ENCODE measurements at regions of chr5 and their contacts with region 1.

Region 1: DNA sequence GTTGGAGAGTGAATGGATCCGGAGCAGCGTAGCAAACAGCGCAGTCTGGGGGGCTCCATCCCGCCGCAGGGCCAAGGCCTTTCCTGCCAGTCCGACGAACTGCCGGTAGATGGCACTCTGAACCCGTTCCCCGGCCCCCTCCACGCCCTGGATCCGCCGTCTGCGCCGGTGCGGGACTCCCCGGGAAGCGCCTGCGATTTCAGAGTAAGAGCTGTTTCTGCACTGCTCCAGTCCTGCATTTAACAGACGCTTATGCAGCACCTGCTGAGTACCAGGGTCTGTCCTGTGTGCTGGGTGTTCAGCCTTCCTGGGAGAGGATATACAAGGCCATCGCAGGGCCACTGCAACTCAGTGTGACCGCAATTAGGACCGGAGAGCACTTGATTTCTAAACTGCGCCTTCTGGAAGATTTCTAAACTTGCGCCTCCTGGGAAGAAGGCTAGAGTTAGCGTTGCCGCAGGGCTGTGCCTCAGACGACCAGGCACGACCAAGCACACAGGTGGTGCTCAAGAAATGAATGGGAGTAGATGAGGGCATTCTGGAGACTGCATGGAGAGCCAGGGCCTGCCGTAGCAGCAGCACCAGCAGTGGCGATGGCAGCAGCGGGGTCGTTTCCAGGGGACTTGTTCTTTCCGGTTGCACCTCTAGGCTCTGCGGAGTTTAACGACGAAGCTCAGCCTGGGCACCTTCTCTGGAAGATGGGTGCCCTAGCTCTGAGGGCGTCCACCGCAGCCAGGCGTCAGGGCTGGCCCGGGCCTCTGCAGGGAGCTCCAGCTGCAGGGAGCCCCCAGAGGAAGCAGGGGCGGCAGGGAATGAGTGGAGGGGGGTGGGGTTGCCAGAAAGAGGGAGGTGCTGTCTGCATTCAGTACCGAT is 14.3 kb upstream of the TIFAB start:
- DNase-seq: peak; percentile 94
- H3K27ac ChIP-seq: no peak overlapping the region
- CTCF ChIP-seq: peak; percentile 98

Region 2: GRCh38 chr5:135386886-135387628 is 79.4 kb before region 1 on chr5:
- CTCF ChIA-PET with region 1: no interaction called
- POLR2A ChIA-PET with region 1: no interaction called
- DNase-seq: peak; percentile 97
- H3K27ac ChIP-seq: peak overlapping the region; percentile 96
- CTCF ChIP-seq: no peak

Region 3: GRCh38 chr5:135405082-135405481 is 61.3 kb before region 1 on chr5:
- CTCF ChIA-PET with region 1: no interaction called
- POLR2A ChIA-PET with region 1: no interaction called
- DNase-seq: no peak
- H3K27ac ChIP-seq: no peak overlapping the region
- CTCF ChIP-seq: no peak

Region 4: DNA sequence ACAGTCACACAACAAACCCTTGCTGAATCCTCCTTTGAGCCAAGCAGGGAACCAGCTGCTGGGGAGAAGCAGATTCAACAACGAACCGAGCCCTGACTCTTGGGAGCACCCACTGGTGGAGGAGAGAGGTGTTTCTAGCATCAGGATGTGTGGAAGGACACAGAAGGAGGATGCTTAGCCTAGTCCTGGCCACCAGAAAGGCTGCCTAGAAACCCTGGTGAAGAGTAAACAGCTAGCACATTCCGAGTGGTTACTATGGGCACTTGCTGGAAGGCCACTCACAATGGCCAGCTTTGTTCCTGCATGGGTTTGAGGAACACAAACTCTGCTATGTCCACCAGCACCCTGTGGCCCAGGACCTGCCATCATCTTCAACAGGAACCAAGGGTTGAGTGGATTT is 16.1 kb before region 1 on chr5:
- CTCF ChIA-PET with region 1: interaction called, 45 read pairs
- POLR2A ChIA-PET with region 1: interaction called, 3 read pairs
- DNase-seq: no peak
- H3K27ac ChIP-seq: no peak overlapping the region
- CTCF ChIP-seq: no peak

Region 5: GRCh38 chr5:135488727-135489465 is 22.5 kb after region 1 on chr5:
- CTCF ChIA-PET with region 1: interaction called, 12 read pairs
- POLR2A ChIA-PET with region 1: no interaction called
- DNase-seq: peak; percentile 81
- H3K27ac ChIP-seq: peak overlapping the region; percentile 68
- CTCF ChIP-seq: no peak

Region 6: GRCh38 chr5:135543485-135544304 is 77.3 kb after region 1 on chr5:
- CTCF ChIA-PET with region 1: interaction called, 455 read pairs
- POLR2A ChIA-PET with region 1: no interaction called
- DNase-seq: no peak
- H3K27ac ChIP-seq: no peak overlapping the region
- CTCF ChIP-seq: no peak

Region 7: DNA sequence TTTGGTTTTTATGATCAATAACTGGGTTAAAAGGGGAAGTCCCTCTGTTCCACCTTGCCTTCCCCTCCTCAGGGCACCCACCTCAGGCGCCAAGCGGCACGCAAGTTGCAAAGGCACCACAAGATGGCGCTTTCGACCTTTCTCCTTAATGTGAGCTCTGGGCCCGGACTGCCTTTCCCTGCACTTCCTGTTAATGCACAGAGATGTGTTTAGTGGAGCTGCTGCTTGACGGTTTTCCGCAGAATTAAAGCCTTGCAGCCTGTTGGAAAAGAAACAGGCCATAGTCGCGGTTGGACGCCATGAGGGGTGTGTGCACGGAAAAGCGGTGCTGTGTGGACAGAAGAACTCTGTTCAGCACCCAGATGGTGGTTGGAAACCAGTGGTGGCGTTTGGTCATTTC is 94.4 kb after region 1 on chr5:
- CTCF ChIA-PET with region 1: interaction called, 455 read pairs
- POLR2A ChIA-PET with region 1: no interaction called
- DNase-seq: peak; percentile 91
- H3K27ac ChIP-seq: no peak overlapping the region
- CTCF ChIP-seq: peak; percentile 95

Measured in RWPE1 (cell line).